SK-N-SH (cell line): ENCODE measurements at regions of chr2 and their contacts with region 1.

Region 1: GRCh38 chr2:13006829-13007717 is 290.3 kb downstream of the TRIB2 start:
- DNase-seq: peak; percentile 73
- H3K4me3 ChIP-seq: peak overlapping the region; percentile 14 to 39; a peak in 2 of 4 replicates
- H3K27ac ChIP-seq: peak overlapping the region; percentile 3 to 64; a peak in 3 of 4 replicates
- H3K4me1 ChIP-seq: peaks cover 25 to 32% of the 10 kb centered on the region in 2 experiments
- H3K27me3 ChIP-seq: no peaks in the 10 kb centered on the region
- CTCF ChIP-seq: peak; percentile 94
- EP300 ChIP-seq: peak; percentile 16 to 94; a peak in 2 of 4 replicates
- RAD21 ChIP-seq: peak; percentile 100

Region 2: GRCh38 chr2:11829947-11830707 is 1176.9 kb before region 1 on chr2:
- CTCF ChIA-PET with region 1: interaction called, 130 read pairs
- POLR2A ChIA-PET with region 1: interaction called, 10 read pairs
- DNase-seq: peak; percentile 85
- H3K4me3 ChIP-seq: peak overlapping the region; percentile 27 to 32
- H3K27ac ChIP-seq: peak overlapping the region; percentile 94 to 95
- H3K4me1 ChIP-seq: peaks cover 38 to 40% of the 10 kb centered on the region in 2 experiments
- H3K27me3 ChIP-seq: no peaks in the 10 kb centered on the region
- CTCF ChIP-seq: peak; percentile 61
- EP300 ChIP-seq: peak in 1 of 2 experiments; percentile 99; a peak in 2 of 4 replicates
- RAD21 ChIP-seq: peak; percentile 85

Region 3: DNA sequence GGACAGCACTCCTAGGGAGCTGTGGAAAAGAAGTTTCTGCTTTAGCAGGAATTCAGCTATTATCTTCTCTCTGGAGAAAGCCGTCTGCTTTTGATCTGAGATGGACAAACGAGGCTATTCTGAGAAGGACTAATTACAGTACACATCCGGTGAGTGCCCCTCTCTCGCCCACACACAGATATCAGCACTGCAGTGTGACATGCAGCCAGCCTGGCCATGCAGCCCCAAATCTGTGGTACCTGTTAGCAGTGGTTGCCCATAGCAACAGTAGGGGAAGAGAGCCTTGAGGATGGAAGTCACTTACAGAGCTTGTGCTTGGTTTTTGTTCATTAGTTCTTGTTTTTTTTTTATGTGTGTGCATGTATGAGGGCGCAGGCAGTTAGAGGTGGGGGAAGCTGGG is 364.2 kb before region 1 on chr2:
- CTCF ChIA-PET with region 1: interaction called, 10 read pairs
- POLR2A ChIA-PET with region 1: no interaction called
- DNase-seq: peak; percentile 46
- H3K4me3 ChIP-seq: no peak overlapping the region
- H3K27ac ChIP-seq: no peak overlapping the region
- H3K4me1 ChIP-seq: peaks cover under 1 to 11% of the 10 kb centered on the region in 2 experiments; a peak in 1 of 4 replicates
- H3K27me3 ChIP-seq: no peaks in the 10 kb centered on the region
- CTCF ChIP-seq: no peak
- EP300 ChIP-seq: peak in 1 of 2 experiments; percentile 52; a peak in 1 of 4 replicates
- RAD21 ChIP-seq: no peak

Region 4: GRCh38 chr2:12742891-12743290 is 264.2 kb before region 1 on chr2:
- CTCF ChIA-PET with region 1: interaction called, 22 read pairs
- POLR2A ChIA-PET with region 1: no interaction called
- DNase-seq: no peak
- H3K4me3 ChIP-seq: no peak overlapping the region
- H3K27ac ChIP-seq: no peak overlapping the region
- H3K4me1 ChIP-seq: peaks cover 10 to 16% of the 10 kb centered on the region in 2 experiments; a peak in 2 of 4 replicates
- H3K27me3 ChIP-seq: no peaks in the 10 kb centered on the region
- CTCF ChIP-seq: no peak
- EP300 ChIP-seq: no peak
- RAD21 ChIP-seq: no peak

Region 5: GRCh38 chr2:12897181-12897580 is 109.9 kb before region 1 on chr2:
- CTCF ChIA-PET with region 1: interaction called, 10 read pairs
- POLR2A ChIA-PET with region 1: no interaction called
- DNase-seq: no peak
- H3K4me3 ChIP-seq: no peak overlapping the region
- H3K27ac ChIP-seq: no peak overlapping the region
- H3K4me1 ChIP-seq: no peaks in the 10 kb centered on the region
- H3K27me3 ChIP-seq: no peaks in the 10 kb centered on the region
- CTCF ChIP-seq: no peak
- EP300 ChIP-seq: no peak
- RAD21 ChIP-seq: no peak

Region 6: GRCh38 chr2:12982149-12982584 is 24.9 kb before region 1 on chr2:
- CTCF ChIA-PET with region 1: interaction called, 32 read pairs
- POLR2A ChIA-PET with region 1: no interaction called
- DNase-seq: peak; percentile 47
- H3K4me3 ChIP-seq: no peak overlapping the region
- H3K27ac ChIP-seq: peak overlapping the region; percentile 12 to 93; a peak in 3 of 4 replicates
- H3K4me1 ChIP-seq: peaks cover 17 to 44% of the 10 kb centered on the region in 2 experiments; a peak in 3 of 4 replicates
- H3K27me3 ChIP-seq: no peaks in the 10 kb centered on the region
- CTCF ChIP-seq: no peak
- EP300 ChIP-seq: peak; percentile 67 to 75; a peak in 3 of 4 replicates
- RAD21 ChIP-seq: no peak